ENCODE measurements at regions of chr6 and their contacts with region 1.

Region 1: GRCh38 chr6:158819213-158819909 is at the start of gene EZR:
- DNase-seq: peak; percentile 76
- H3K4me3 ChIP-seq: peak within 1 kb of the TSS; percentile 80 to 87 (median 80)
- H3K27ac ChIP-seq: peak within 1 kb of the TSS; percentile 96
- H3K4me1 ChIP-seq: peaks cover 21% of the 10 kb centered on the region
- H3K27me3 ChIP-seq: no peaks in the 10 kb centered on the region
- CTCF ChIP-seq: no peak
- total RNA-seq, gene EZR: 164 to 240 TPM

Region 2: GRCh38 chr6:158869826-158870648 is 50.7 kb after region 1 on chr6:
- CTCF ChIA-PET with region 1: no interaction called
- dilution Hi-C with region 1: no loop called
- in situ Hi-C with region 1: no loop called
- intact Hi-C with region 1: loop called (anchors 1 kb)
- DNase-seq: peak; percentile 99
- H3K4me3 ChIP-seq: peak overlapping the region in 2 of 3 experiments; percentile 35 to 41
- H3K27ac ChIP-seq: peak overlapping the region; percentile 100
- H3K4me1 ChIP-seq: peaks cover 16% of the 10 kb centered on the region
- H3K27me3 ChIP-seq: no peaks in the 10 kb centered on the region
- CTCF ChIP-seq: peak in 1 of 2 donors; percentile 50

Region 3: DNA sequence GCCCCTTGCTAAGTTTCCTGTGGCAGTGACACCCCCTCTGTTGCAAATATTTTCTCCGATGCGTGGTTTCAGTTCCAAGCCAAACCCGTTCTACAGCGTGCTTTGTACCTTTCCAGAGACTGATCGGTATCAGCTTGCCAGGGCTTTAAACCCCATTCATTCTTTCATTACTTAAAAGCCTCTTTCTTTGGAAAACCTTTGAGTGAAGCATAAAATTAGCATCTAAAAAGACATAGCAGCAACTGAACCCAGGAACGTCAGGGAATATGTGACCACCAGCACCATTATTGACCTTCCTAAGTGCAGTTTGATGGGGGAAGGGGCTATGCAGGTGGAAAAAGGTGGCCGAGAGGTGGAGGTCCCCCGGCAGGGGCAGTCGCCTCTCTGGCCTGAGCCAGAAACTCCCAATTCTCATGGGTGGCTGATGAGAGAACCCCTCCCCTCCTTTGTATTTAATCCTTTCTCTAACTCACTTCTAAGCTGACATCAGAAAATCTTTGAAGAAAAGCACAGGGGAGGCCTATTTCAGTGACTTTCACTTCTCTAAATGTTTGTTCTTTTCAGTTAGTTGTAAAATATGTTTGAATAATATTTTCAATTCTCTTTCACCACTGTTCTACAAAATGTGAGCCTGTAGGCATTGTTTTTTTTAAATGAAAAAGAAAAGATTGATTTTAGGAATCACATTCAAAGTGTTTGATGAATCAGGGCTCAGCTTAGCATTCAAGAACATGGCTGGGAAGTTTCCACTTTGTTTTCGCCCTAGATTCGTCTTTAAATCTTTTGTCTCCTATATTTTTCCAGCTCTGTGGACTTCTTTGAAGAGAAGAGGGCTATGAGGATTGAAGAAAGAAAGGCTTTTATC is 91.4 kb after region 1 on chr6:
- CTCF ChIA-PET with region 1: no interaction called
- dilution Hi-C with region 1: no loop called
- in situ Hi-C with region 1: no loop called
- intact Hi-C with region 1: loop called (anchors 5 kb)
- DNase-seq: peak; percentile 53
- H3K4me3 ChIP-seq: peak overlapping the region in 1 of 3 experiments; percentile 19
- H3K27ac ChIP-seq: peak overlapping the region; percentile 22
- H3K4me1 ChIP-seq: peaks cover 17% of the 10 kb centered on the region
- H3K27me3 ChIP-seq: no peaks in the 10 kb centered on the region
- CTCF ChIP-seq: no peak

Region 4: GRCh38 chr6:158958504-158959386 is 139.4 kb after region 1 on chr6:
- CTCF ChIA-PET with region 1: no interaction called
- dilution Hi-C with region 1: no loop called
- in situ Hi-C with region 1: no loop called
- intact Hi-C with region 1: loop called (anchors 2 kb)
- DNase-seq: peak; percentile 31
- H3K4me3 ChIP-seq: no peak overlapping the region
- H3K27ac ChIP-seq: no peak overlapping the region
- H3K4me1 ChIP-seq: peaks cover 8% of the 10 kb centered on the region
- H3K27me3 ChIP-seq: no peaks in the 10 kb centered on the region
- CTCF ChIP-seq: peak in 1 of 2 donors; percentile 47

Measured in mammary epithelial cell (primary cell).